GM12878 (cell line): ENCODE measurements at regions of chr19 and their contacts with region 1.

Region 1: DNA sequence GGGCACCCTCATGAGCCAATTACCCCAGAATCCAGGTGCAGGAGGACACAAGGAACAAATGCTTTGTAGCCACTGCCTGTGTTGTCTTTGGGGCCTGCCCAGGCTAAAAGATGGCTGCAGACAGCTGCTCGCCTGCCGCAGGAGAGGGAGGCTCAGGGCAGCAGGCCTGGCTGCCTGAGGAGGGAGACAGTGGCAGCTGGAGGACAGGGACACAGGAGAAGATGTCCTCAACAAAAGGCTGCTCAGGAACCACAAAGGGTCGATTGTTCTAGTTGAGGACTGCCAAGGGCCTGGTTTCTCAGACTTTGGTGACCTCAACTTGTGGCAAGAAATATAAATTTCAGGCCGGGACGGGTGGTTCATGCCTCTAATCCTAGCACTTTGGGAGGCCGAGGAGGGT is 7.6 kb downstream of the SIRT2 start:
- DNase-seq: no peak
- ATAC-seq: no peak
- H3K4me3 ChIP-seq: no peak overlapping the region
- H3K27ac ChIP-seq: no peak overlapping the region
- H3K4me1 ChIP-seq: no peaks in the 10 kb centered on the region
- H3K27me3 ChIP-seq: no peaks in the 10 kb centered on the region
- CTCF ChIP-seq: no peak
- EP300 ChIP-seq: no peak
- POLR2A ChIP-seq: no peak
- RAD21 ChIP-seq: no peak

Region 2: GRCh38 chr19:38514812-38515633 is 376.7 kb before region 1 on chr19:
- CTCF ChIA-PET with region 1: interaction called, 15 read pairs
- POLR2A ChIA-PET with region 1: no interaction called
- RAD21 ChIA-PET with region 1: interaction called, 5 read pairs
- SMC1A ChIA-PET with region 1: interaction called, 5 read pairs
- in situ Hi-C with region 1: no loop called
- intact Hi-C with region 1: no loop called
- DNase-seq: no peak
- ATAC-seq: peak; percentile 96
- H3K4me3 ChIP-seq: no peak overlapping the region
- H3K27ac ChIP-seq: no peak overlapping the region
- H3K4me1 ChIP-seq: peaks cover 6% of the 10 kb centered on the region
- H3K27me3 ChIP-seq: no peaks in the 10 kb centered on the region
- CTCF ChIP-seq: peak; percentile 89 to 98 (median 90); a peak in 5 of 6 replicates
- EP300 ChIP-seq: no peak
- POLR2A ChIP-seq: no peak
- RAD21 ChIP-seq: peak; percentile 74

Region 3: DNA sequence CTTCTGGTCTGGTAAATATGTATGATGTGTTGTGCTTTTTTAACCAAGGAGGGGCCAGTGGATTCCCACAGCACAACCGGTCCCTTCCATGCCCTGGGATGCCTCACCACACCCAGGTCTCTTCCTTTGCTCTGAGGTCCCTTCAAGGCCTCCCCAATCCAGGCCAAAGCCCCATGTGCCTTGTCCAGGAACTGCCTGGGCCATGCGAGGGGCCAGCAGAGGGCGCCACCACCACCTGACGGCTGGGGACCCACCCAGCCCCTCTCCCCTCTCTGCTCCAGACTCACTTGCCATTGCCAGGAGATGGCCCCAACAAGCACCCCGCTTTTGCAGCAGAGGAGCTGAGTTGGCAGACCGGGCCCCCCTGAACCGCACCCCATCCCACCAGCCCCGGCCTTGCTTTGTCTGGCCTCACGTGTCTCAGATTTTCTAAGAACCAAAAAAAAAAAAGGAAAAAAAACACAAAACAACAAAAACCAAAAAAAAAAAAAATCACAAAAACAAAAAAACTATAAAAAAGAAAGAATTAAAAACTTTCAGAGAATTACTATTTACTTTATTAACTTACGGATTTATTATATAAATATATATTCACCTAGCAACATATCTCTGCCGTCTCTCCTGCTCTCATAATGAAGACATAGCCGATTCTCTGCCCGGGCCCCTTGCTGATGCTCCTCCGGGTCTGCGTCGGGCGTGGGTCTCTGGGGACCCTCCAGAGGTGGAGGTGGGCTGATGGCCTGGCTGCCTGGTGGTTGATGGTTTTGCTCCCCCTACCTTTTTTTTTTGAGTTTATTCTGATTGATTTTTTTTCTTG is 161.9 kb before region 1 on chr19:
- CTCF ChIA-PET with region 1: interaction called, 15 read pairs
- POLR2A ChIA-PET with region 1: no interaction called
- RAD21 ChIA-PET with region 1: interaction called, 8 read pairs
- SMC1A ChIA-PET with region 1: interaction called, 4 read pairs
- in situ Hi-C with region 1: no loop called
- intact Hi-C with region 1: no loop called
- DNase-seq: no peak
- ATAC-seq: peak; percentile 92
- H3K4me3 ChIP-seq: no peak overlapping the region
- H3K27ac ChIP-seq: no peak overlapping the region
- H3K4me1 ChIP-seq: peaks cover 15% of the 10 kb centered on the region
- H3K27me3 ChIP-seq: no peaks in the 10 kb centered on the region
- CTCF ChIP-seq: peak; percentile 71 to 97 (median 79)
- EP300 ChIP-seq: no peak
- POLR2A ChIP-seq: no peak
- RAD21 ChIP-seq: peak; percentile 67

Region 4: GRCh38 chr19:38831142-38831605 is 60.6 kb before region 1 on chr19:
- CTCF ChIA-PET with region 1: interaction called, 9 read pairs
- POLR2A ChIA-PET with region 1: no interaction called
- RAD21 ChIA-PET with region 1: interaction called, 11 read pairs
- SMC1A ChIA-PET with region 1: interaction called, 14 read pairs
- in situ Hi-C with region 1: no loop called
- intact Hi-C with region 1: loop called (anchors 10 kb)
- DNase-seq: no peak
- ATAC-seq: peak; percentile 91
- H3K4me3 ChIP-seq: peak overlapping the region; percentile 75
- H3K27ac ChIP-seq: peak overlapping the region; percentile 95
- H3K4me1 ChIP-seq: no peaks in the 10 kb centered on the region; the same call in 1 of the 2 replicates
- H3K27me3 ChIP-seq: no peaks in the 10 kb centered on the region
- CTCF ChIP-seq: no peak
- EP300 ChIP-seq: no peak
- POLR2A ChIP-seq: no peak
- RAD21 ChIP-seq: no peak

Region 5: GRCh38 chr19:38849860-38850435 is 41.8 kb before region 1 on chr19 and contains the start of gene HNRNPL:
- CTCF ChIA-PET with region 1: interaction called, 20 read pairs
- POLR2A ChIA-PET with region 1: no interaction called
- RAD21 ChIA-PET with region 1: interaction called, 5 read pairs
- SMC1A ChIA-PET with region 1: interaction called, 8 read pairs
- in situ Hi-C with region 1: no loop called
- intact Hi-C with region 1: no loop called
- DNase-seq: peak; percentile 100
- ATAC-seq: peak; percentile 76
- H3K4me3 ChIP-seq: peak within 1 kb of the TSS; percentile 79
- H3K27ac ChIP-seq: peak within 1 kb of the TSS; percentile 96
- H3K4me1 ChIP-seq: peaks cover 10% of the 10 kb centered on the region
- H3K27me3 ChIP-seq: no peaks in the 10 kb centered on the region
- CTCF ChIP-seq: peak; percentile 28 to 42 (median 33); a peak in 4 of 6 replicates
- EP300 ChIP-seq: 0 out of 4 replicates have a peak, but pooled peaks of 1 of the 2 experiments have one; percentile 10
- POLR2A ChIP-seq: peak; percentile 90
- RAD21 ChIP-seq: no peak
- polyA plus RNA-seq, gene HNRNPL: 32.5 to 92.5 TPM